Activated T-helper 1 cell treated with anti-CD3 and anti-CD28 coated beads, Interleukin-12 subunit alpha, Interleukin-12 subunit beta, Interleukin-2, Interleukin-4 antibody, amounts not matched to agents 30 ng/mL and 10 ng/mL and 1 ng/mL, durations not matched to agents 14 hours and 24 hours and 36 hours (primary cell): ENCODE measurements at regions of chr10 and their contacts with region 1.

Region 1: GRCh38 chr10:62231371-62231770 is 37.3 kb downstream of the RTKN2 start:
- DNase-seq: no peak
- H3K4me3 Mint-ChIP-seq: no peak overlapping the region
- H3K27ac Mint-ChIP-seq: no peak overlapping the region
- H3K4me1 Mint-ChIP-seq: peaks cover 15% of the 10 kb centered on the region
- H3K27me3 Mint-ChIP-seq: no peaks in the 10 kb centered on the region

Region 2: DNA sequence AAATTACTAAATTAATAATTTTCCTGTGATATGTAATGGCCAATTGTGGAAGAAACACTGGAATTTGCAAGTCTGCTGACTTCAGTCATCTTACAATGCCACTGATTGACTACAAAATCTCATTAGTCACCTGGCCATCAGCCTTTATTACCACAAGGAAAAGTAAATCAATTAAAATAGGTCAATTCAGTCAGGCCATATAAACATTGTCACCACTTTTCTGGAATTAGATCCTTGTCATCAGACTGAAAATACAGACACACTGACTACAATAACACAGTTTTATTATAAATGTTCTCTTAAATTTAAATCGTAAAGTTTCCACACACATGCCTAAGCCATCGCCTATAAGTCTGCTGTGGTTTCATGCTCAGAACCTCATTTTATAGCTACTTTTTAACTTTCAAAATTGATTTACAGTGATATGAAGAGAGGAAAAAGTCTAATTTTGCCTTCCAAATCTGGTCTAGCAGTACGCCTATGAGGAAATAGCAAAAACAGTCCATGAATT is 17.0 kb before region 1 on chr10:
- intact Hi-C with region 1: loop called (anchors 2 kb)
- DNase-seq: no peak
- H3K4me3 Mint-ChIP-seq: no peak overlapping the region
- H3K27ac Mint-ChIP-seq: no peak overlapping the region
- H3K4me1 Mint-ChIP-seq: peaks cover 4% of the 10 kb centered on the region
- H3K27me3 Mint-ChIP-seq: no peaks in the 10 kb centered on the region